Ascending aorta (tissue), 2 donors: ENCODE measurements at regions of chr2 and their contacts with region 1.

Region 1: DNA sequence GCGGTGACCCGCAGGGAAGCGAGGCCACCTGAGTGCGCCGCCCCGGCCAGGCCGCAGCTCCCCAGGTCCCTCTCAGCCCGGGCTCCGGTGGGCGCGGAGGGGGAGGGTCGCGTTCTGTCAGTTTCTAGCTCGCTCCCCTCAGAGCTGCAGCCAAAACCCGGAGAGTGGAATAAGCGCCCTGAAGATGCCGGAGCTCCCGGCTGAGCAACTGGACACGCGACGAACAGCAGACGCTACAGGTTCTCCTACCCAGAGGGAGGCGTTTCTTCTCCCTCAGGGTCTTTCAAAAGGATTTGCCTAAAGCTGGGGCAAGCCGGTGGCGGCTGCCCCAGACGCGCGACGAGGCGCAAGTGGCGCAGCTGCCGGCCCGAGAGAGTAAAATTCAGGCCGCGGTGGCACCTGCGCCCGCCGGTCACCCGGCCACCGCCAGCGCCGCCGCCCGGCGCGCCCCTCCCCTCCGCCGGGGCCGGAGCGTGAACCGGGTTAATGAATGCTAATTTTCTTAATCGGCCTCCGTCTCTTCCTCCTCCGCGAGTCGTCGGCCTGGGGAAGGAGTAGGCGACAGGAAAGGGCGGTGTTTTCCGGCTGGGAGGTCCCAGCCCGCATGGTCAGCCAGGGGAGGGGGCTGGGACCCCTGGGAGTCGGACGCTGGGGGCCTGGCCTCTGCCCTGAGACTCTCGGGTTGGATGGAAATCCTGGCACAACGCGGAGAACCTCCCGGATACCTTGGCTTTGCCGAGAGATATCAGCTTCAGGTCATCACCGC is 845 bp upstream of the CDC42EP3 start:
- DNase-seq: peak; percentile 21 to 82
- H3K4me3 ChIP-seq: peak overlapping the region; percentile 90 to 97
- H3K27ac ChIP-seq: peak overlapping the region; percentile 86 to 97
- H3K4me1 ChIP-seq: peaks cover 0 to 21% of the 10 kb centered on the region in 2 donors
- H3K27me3 ChIP-seq: no peaks in the 10 kb centered on the region
- CTCF ChIP-seq: peak in 1 of 3 experiments; percentile 4

Region 2: GRCh38 chr2:37414470-37414949 is 257.8 kb before region 1 on chr2:
- intact Hi-C with region 1: loop called (anchors 5 kb)
- DNase-seq: no peak
- H3K4me3 ChIP-seq: no peak overlapping the region
- H3K27ac ChIP-seq: peak overlapping the region in 1 of 2 donors; percentile 31
- H3K4me1 ChIP-seq: peaks cover 0 to 3% of the 10 kb centered on the region in 2 donors
- H3K27me3 ChIP-seq: no peaks in the 10 kb centered on the region
- CTCF ChIP-seq: peak; percentile 75 to 95 (median 84)

Region 3: GRCh38 chr2:37582481-37583220 is 89.6 kb before region 1 on chr2:
- intact Hi-C with region 1: loop called (anchors 5 kb)
- DNase-seq: no peak
- H3K4me3 ChIP-seq: peak overlapping the region in 1 of 2 donors; percentile 40
- H3K27ac ChIP-seq: peak overlapping the region; percentile 8 to 64
- H3K4me1 ChIP-seq: peaks cover 18 to 37% of the 10 kb centered on the region in 2 donors
- H3K27me3 ChIP-seq: no peaks in the 10 kb centered on the region
- CTCF ChIP-seq: no peak

Region 4: DNA sequence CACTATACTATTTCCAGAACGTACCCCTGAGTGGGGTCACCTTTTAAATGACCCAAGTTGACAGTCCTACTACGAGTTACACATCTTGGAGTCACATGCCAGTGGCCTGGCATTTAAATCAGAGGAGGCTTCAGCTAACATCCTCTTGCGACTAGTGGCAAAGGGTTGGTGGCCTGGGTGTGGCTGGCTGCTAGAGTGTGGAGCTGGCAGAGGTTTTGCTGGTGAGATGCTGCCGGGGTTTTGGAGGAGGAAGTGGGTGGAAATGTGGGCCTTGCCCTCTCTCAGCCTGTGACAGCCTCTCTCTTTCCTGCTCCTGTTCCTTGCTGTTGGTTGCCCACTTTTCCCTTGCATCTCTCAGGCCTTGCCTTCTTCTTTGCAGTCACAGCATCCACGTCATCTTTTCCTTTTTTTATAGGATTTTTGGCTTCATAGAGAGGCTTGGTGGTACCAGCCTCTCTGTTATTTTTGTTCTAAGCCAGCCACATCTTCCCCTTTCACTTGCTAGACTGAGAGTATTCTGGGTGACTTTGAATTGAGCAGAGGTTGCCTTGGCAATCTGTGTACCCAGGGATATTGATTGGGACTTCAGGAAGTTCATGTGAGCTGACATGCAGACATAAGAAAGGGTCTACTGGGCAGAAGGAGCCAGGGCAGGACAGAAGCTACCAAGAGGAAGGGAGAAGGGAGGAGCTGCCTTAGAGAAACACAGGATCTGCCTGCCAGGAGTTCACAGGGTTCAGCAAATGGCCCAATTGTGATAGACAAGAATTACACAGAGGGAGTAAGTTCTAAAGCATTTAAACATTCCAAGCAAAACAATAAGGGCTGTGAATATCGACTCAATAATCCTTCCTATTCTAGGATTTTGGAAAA is 56.2 kb before region 1 on chr2:
- intact Hi-C with region 1: loop called (anchors 5 kb)
- DNase-seq: peak; percentile 34 to 70
- H3K4me3 ChIP-seq: no peak overlapping the region
- H3K27ac ChIP-seq: peak overlapping the region; percentile 70 to 78
- H3K4me1 ChIP-seq: peaks cover 16 to 45% of the 10 kb centered on the region in 2 donors
- H3K27me3 ChIP-seq: no peaks in the 10 kb centered on the region
- CTCF ChIP-seq: no peak

Region 5: DNA sequence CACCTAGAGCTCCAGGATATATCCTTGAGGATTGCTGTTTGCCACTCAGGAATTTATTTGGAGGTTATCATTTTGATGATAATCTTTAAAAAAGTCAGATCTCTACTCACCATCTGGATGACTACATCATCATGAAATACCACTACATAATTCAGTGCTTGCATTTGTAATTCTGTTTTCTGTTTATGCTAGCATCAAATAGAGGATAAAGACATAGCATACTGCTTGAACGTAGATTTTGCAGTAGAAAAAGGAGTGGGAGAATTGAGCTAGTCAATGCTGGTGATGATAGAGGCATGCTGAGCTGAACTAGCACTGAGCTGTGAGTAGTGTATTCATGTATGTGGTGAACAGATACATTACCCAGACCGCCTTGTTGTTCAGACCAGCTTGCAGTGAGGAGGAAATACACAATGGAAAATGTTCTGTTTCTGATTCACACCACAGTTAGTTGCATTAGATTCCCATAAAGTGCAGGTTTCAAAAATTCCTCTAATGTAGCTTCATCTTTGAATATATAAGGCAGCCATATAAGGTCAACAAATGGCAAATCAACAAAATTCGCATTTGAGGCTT is 68.0 kb after region 1 on chr2:
- intact Hi-C with region 1: loop called (anchors 2 kb)
- DNase-seq: no peak
- H3K4me3 ChIP-seq: no peak overlapping the region
- H3K27ac ChIP-seq: no peak overlapping the region
- H3K4me1 ChIP-seq: peaks cover 0 to 24% of the 10 kb centered on the region in 2 donors
- H3K27me3 ChIP-seq: no peaks in the 10 kb centered on the region
- CTCF ChIP-seq: no peak

Region 6: DNA sequence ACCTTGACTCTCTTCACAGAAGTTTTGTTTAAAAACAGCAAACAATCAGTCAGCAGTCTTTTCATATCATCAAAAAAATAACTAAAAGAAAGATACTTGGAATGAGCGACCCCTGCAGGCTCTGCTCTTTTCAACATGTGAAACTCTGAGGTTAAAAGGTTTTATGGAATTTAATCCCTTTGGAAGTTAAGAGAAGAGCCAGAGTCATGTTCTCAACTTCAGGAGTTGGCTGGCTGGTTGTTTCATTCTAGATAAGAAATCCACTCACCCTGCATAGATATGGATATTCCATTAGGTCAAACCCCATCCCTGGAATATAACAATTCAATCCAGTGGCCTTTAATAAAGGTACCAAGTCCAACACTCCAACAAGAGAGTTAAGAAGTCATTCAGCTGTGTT is 137.2 kb after region 1 on chr2:
- intact Hi-C with region 1: loop called (anchors 5 kb)
- DNase-seq: no peak
- H3K4me3 ChIP-seq: no peak overlapping the region
- H3K27ac ChIP-seq: peak overlapping the region; percentile 52 to 76
- H3K4me1 ChIP-seq: peaks cover 4 to 14% of the 10 kb centered on the region in 2 donors
- H3K27me3 ChIP-seq: no peaks in the 10 kb centered on the region
- CTCF ChIP-seq: peak; percentile 38 to 56 (median 40)

Region 7: GRCh38 chr2:37832590-37833197 is 160.4 kb after region 1 on chr2:
- intact Hi-C with region 1: loop called (anchors 2 kb)
- DNase-seq: peak; percentile 38 to 96
- H3K4me3 ChIP-seq: no peak overlapping the region
- H3K27ac ChIP-seq: no peak overlapping the region
- H3K4me1 ChIP-seq: peaks cover 0 to 16% of the 10 kb centered on the region in 2 donors
- H3K27me3 ChIP-seq: no peaks in the 10 kb centered on the region
- CTCF ChIP-seq: peak; percentile 63 to 91 (median 82)